ENCODE measurements at regions of chr15 and their contacts with region 1.

Region 1: DNA sequence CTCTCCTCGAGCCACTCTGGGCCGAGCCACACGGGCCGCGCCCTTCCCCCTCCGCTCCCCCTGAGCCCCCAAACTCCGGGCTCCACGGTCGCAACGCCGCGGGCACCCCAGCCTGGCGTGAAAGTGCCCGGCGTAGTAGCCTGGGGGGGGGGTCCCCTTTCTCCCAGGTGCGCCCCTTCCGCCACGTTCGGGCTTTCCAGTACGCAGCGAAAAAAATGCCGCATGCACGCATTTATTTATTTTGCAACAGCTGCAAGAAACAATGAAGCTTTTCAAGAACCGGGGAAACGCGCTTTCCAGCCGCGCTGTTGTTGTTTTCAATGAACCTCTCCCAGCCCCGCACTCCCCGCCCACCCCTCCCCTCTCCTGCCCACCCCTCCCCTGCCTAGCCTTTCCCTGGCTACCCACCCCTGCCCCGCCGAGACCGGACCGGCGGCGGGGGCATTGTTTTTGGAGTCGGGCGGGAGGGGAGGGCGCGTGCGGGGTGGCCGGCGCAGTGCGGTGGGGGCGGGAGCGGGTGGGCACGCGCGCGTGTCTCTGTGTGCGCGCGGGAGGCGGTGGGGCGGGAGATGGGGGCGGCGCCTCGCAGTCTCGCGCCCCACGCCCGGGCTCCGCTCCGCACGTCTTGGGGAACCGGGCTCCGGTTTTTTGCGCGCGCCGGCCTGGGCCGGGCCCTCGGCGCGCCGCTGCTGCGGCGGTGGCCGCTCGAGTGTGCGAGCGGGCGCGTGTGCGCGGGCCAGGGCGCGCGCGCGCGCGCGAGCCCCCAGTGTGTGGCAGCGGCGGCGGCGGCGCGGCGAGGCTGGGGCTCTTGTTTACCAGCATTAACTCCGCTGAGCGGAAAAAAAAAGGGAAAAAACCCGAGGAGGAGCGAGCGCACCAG is at the start of gene IGF1R:
- DNase-seq: peak; percentile 88
- ATAC-seq: peak; percentile 83
- H3K4me3 Mint-ChIP-seq: peak within 1 kb of the TSS; percentile 87
- H3K27ac Mint-ChIP-seq: peak within 1 kb of the TSS; percentile 76
- H3K4me1 Mint-ChIP-seq: peaks cover 22% of the 10 kb centered on the region
- H3K27me3 Mint-ChIP-seq: peaks cover 26% of the 10 kb centered on the region
- CTCF ChIP-seq: no peak
- total RNA-seq, gene IGF1R: 5.9 and 6.7 TPM in 2 replicates

Region 2: DNA sequence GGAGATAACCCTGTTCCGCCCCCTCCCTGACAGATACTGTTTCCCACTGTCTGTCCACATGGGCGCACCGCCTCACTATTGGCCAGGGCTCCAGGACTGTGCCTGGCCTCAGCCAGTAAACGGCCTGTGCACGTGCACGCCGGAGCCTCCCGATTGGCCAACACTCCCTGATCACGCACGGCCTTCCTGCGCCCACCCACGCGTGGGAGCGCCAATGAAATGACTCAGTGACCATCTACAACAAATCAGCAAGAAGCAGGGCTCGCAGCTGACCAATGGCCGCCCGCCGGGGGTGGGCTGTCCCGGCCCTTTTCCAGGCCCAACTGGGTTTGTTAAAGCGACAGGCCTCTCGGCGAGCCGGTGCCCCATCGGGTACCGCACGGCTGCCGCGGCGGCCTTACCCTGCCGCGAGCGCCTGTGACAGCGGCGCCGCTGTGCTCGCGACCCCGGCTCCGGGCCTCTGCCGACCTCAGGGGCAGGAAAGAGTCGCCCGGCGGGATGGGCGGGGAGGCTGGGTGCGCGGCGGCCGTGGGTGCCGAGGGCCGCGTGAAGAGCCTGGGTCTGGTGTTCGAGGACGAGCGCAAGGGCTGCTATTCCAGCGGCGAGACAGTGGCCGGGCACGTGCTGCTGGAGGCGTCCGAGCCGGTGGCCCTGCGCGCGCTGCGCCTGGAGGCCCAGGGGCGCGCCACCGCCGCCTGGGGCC is 687.5 kb before region 1 on chr15 and contains the start of gene ARRDC4:
- CTCF ChIA-PET with region 1: no interaction called
- POLR2A ChIA-PET with region 1: no interaction called
- intact Hi-C with region 1: loop called (anchors 2 kb)
- DNase-seq: peak; percentile 88
- ATAC-seq: peak; percentile 94
- H3K4me3 Mint-ChIP-seq: peak within 1 kb of the TSS; percentile 80
- H3K27ac Mint-ChIP-seq: peak within 1 kb of the TSS; percentile 81
- H3K4me1 Mint-ChIP-seq: peaks cover 26% of the 10 kb centered on the region
- H3K27me3 Mint-ChIP-seq: peaks cover 3% of the 10 kb centered on the region
- CTCF ChIP-seq: no peak
- total RNA-seq, gene ARRDC4: 1.8 and 2.0 TPM in 2 replicates

Region 3: DNA sequence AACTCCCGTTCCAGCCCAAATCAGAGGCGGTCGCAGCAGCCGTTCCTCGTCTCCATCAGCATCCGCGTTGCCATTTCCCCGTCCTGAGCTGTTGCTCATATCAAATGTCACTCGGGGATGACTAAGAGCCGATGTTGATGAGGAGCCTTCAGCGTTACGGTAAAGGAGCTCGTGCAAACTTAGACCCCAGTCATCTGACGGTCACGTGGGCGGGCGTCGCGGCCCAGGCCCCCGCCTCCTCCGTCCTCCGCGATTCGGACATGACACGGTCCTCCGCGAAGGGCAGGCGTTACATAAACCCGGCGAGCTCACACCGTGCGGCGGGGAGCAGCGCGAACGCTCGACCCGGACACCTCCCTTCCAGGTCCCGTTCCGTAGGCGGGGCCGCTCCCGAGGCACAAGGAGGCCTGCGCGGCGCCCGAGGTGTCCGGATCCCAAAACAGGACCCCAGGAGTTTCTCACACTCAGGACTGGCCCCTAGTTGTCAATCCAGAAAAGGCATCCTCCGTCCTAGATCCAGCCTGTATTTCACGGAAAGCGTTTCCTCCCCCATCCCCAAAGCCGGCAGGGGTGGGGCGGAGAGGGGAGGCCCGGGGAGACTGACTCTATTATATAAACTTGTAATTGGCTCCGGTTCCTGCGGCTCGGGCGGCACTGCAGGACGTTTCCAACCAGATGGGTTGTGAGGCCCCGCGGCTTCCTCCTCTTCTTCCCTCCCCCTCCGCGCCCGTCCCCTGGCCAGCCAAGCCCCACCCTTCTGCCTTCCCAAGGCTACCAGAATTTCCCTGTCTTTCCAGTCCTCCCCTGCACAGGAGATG is 99.7 kb before region 1 on chr15:
- CTCF ChIA-PET with region 1: no interaction called
- POLR2A ChIA-PET with region 1: no interaction called
- intact Hi-C with region 1: loop called (anchors 2 kb)
- DNase-seq: peak; percentile 16
- ATAC-seq: peak; percentile 57
- H3K4me3 Mint-ChIP-seq: peak overlapping the region; percentile 80
- H3K27ac Mint-ChIP-seq: peak overlapping the region; percentile 2
- H3K4me1 Mint-ChIP-seq: peaks cover 22% of the 10 kb centered on the region
- H3K27me3 Mint-ChIP-seq: peaks cover 34% of the 10 kb centered on the region
- CTCF ChIP-seq: no peak

Region 4: DNA sequence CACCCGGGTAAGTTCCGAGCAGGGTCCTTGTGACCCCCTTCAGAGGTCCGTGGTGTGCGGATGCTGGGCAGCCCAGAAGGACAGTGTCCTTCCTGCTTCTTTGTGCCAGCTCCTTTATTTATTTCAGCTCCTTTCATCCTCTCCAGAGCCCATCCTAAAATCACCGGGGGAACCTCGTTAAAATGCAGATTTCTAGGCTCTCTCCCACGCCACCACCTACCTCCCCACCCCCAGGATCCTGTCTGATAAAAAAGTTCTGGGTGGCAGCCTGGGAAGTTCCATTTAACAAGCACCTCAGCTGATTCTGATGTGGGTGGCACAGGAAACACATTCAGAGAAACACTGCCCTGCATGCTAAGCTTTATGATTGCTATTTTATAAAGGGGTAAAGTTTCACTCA is 12.2 kb before region 1 on chr15:
- CTCF ChIA-PET with region 1: no interaction called
- POLR2A ChIA-PET with region 1: no interaction called
- intact Hi-C with region 1: no loop called
- DNase-seq: no peak
- ATAC-seq: no peak
- H3K4me3 Mint-ChIP-seq: no peak overlapping the region
- H3K27ac Mint-ChIP-seq: no peak overlapping the region
- H3K4me1 Mint-ChIP-seq: no peaks in the 10 kb centered on the region
- H3K27me3 Mint-ChIP-seq: peaks cover 10% of the 10 kb centered on the region
- CTCF ChIP-seq: no peak

Region 5: DNA sequence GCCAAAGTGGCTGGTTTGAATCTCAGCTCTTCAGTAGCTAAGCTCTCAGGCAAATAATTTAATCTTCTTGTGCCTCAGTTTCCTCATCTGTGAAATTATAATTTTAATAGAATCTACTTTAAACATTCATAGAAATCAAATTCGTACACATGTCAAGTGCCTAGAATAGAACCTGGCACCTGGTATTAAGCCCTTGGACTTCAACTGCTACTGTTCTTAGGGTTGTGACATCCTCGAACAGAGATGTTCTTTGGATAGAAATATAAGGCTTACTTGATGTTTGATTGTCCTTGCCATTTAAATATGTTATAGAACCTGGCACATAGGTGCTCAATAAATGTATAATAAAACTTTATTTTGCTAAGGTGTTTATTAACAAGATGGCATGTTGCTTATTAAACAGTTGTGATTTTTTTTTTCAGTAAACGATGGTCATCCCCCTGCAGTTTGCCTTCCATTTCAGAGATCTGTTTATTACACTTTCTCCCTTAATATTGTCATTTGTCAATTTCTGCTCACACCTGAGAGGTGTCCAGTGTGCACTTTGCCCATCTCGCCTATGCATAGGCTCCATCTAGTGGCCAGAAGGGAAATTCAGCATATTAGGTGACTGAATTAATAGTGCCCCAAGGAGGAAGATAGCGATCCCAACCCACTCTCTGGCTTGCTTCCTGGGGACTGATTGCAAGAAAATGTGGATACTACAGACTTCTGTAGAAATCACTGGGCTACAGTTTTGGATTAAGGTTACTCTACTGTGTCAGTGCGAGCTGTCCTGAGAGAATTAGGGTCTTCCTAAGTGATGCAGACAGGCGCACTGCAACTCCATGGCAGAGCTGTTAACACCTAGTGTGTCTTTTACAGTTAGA is 11.1 kb after region 1 on chr15:
- CTCF ChIA-PET with region 1: interaction called, 3 read pairs
- POLR2A ChIA-PET with region 1: no interaction called
- intact Hi-C with region 1: loop called (anchors 1 kb)
- DNase-seq: no peak
- ATAC-seq: peak; percentile 75
- H3K4me3 Mint-ChIP-seq: no peak overlapping the region
- H3K27ac Mint-ChIP-seq: no peak overlapping the region
- H3K4me1 Mint-ChIP-seq: no peaks in the 10 kb centered on the region
- H3K27me3 Mint-ChIP-seq: peaks cover 9% of the 10 kb centered on the region
- CTCF ChIP-seq: peak; percentile 54

Region 6: GRCh38 chr15:98853161-98853560 is 205.1 kb after region 1 on chr15:
- CTCF ChIA-PET with region 1: interaction called, 3 read pairs
- POLR2A ChIA-PET with region 1: interaction called, 3 read pairs
- intact Hi-C with region 1: loop called (anchors 1 kb)
- DNase-seq: peak; percentile 59
- ATAC-seq: peak; percentile 65
- H3K4me3 Mint-ChIP-seq: peak overlapping the region; percentile 93
- H3K27ac Mint-ChIP-seq: peak overlapping the region; percentile 90
- H3K4me1 Mint-ChIP-seq: peaks cover 29% of the 10 kb centered on the region
- H3K27me3 Mint-ChIP-seq: peaks cover 5% of the 10 kb centered on the region
- CTCF ChIP-seq: no peak

Region 7: DNA sequence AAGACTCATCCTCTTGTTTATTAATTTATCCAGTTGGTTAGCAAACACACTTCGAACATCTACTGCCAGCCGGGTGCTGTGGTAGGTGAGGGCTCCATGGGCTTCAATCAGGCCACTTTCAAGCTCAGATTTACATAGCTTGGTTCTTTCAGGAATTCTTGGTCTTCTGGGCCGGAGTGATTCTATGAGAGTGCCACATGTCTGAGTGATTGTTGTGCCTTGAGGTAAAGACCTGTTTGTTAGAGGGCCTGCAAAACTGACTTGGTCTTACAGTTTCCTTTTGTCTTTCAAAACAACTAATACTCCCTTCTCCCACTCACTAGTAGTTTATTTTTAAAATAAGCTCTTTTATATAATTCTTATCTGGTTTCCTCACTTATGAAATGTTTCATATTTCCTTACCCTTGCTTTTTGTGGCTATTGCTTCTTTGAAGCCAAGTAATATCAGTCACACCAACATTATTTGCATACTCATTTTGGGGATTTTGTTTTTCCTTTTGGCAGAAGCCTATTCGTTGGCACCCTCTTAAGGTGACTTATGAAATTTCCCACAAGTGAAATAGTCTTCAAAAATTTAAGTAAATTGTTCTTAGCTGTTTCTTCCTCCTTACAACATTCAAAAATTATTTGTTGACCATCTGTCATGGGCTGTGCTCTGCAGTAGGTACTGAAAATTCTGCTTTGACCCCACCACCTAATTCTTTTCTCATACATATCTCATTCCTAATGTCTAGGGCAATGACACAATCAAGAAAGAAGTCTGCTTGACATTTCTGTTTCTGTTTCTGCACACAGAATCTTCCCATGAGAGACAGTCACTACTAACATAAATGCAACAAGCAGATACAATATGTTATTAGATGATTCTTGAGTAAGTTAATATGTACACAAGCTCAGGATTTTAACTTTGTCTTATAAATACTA is 723.4 kb after region 1 on chr15:
- CTCF ChIA-PET with region 1: no interaction called
- POLR2A ChIA-PET with region 1: no interaction called
- intact Hi-C with region 1: no loop called
- DNase-seq: no peak
- ATAC-seq: peak; percentile 73
- H3K4me3 Mint-ChIP-seq: no peak overlapping the region
- H3K27ac Mint-ChIP-seq: peak overlapping the region; percentile 10
- H3K4me1 Mint-ChIP-seq: peaks cover 16% of the 10 kb centered on the region
- H3K27me3 Mint-ChIP-seq: no peaks in the 10 kb centered on the region
- CTCF ChIP-seq: no peak

Region 8: DNA sequence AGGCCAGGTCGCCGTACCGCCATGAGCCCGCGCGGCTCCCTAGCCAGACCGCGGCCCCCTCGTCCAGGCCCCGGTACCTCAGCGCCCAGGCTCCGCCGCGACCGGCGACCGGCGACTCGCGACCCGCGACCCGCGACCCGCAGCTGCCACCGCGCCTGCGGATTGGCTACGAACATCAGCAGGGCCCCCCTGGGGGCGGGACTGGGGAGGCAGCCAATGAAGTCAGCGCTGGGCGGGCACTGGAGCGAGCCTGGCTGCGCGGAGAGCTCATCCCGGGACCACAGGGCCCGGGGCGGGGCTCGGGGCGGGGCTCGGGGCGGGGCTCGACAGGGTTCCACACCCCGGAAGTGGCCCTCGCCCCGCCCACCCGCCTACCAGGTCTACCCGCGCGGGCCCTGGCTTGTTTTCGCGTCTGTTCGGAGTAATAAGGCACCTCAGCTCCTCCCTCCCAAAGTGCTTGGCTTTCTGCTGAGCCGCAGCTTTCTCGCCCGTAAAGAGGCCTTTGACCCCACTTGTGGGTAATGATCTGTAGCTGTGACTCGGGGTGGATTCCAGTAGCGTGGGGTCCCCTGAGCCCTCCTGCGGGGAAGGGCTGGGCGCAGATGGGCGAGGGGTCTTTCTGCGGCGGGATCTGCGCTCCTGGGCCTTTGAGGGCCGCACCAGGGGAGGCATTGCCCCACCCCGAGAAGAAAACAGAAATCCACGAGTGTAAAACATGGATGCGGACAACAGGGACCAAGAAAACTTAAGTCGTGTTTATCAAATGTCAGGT is 1085.4 kb after region 1 on chr15 and contains the start of gene LYSMD4:
- CTCF ChIA-PET with region 1: no interaction called
- POLR2A ChIA-PET with region 1: interaction called, 4 read pairs
- intact Hi-C with region 1: loop called (anchors 10 kb)
- DNase-seq: peak; percentile 95
- ATAC-seq: peak; percentile 99
- H3K4me3 Mint-ChIP-seq: peak within 1 kb of the TSS; percentile 85
- H3K27ac Mint-ChIP-seq: peak within 1 kb of the TSS; percentile 83
- H3K4me1 Mint-ChIP-seq: peaks cover 14% of the 10 kb centered on the region
- H3K27me3 Mint-ChIP-seq: no peaks in the 10 kb centered on the region
- CTCF ChIP-seq: no peak
- total RNA-seq, gene LYSMD4: 4.7 and 6.1 TPM in 2 replicates

Measured in activated B cell treated with CpG ODN at 0.5 μM for 24 hours (primary cell).